PC-3 (cell line): ENCODE measurements at regions of chr1 and their contacts with region 1.

Region 1: DNA sequence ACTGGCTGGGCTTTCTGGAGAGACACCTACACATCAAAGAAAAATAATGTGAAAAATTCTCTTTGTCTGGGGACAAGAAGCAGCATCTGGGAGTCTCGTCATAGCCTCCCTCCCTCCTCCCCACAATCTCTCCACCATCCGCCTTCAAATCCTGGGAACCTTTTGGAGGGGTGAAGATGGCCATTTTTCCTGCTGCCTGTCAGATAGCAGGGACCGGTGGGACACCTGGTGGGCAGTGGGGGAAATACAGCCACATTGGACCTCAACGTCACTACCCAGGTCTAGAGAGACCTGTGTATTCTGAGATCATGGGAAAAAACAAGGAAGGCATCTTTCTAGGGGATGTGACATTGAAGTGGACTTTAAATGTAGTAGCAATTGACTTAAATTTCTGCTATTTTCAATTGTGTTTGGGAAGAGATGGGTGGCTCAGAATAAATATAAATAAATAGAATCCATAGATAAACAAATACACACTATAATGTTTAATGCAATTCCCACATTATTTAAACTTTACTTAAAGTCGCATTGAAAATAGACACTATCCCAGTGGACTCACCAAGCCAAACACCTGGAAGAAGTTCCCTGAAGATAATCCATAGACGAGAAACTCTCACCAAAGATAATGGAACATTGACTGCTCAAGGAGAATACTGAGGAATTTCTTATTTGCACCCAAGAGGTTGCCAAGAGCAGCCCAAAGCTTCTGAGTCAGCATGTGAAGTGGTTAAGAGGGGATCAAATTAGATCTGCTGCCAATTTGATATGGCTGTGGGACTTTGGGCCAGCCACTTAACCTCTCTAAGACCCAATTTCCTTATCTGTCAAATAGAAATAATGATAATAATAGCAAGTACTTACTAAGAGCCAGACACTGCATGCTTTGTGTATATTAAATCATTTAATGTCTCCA is 147.6 kb upstream of the CAMK1G start:
- DNase-seq: peak; percentile 98
- ATAC-seq: peak; percentile 81
- H3K4me3 ChIP-seq: no peak overlapping the region
- H3K27ac ChIP-seq: peak overlapping the region; percentile 88
- H3K4me1 ChIP-seq: peaks cover 53% of the 10 kb centered on the region
- H3K27me3 ChIP-seq: no peaks in the 10 kb centered on the region
- CTCF ChIP-seq: peak; percentile 98

Region 2: DNA sequence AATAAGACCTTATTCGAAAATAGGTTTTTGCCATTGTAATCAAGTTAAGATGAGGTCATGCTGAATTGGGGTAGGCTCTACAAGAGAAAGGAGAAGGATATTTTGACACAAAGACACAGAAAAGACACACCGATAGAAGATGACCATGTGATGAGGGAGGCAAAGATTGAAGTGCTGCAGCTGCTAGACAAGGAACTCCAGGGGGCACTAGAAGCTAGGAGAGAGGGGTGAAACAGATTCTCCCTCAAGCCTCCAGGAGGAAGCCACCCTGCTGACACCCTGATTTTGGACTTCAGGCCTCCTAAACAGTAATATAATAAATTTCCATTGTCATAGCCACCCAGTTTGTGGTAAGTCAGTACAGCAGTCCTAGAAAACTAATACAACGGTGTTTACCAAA is 359.2 kb before region 1 on chr1:
- CTCF ChIA-PET with region 1: no interaction called
- POLR2A ChIA-PET with region 1: no interaction called
- intact Hi-C with region 1: loop called (anchors 10 kb)
- DNase-seq: peak; percentile 67
- ATAC-seq: no peak
- H3K4me3 ChIP-seq: no peak overlapping the region
- H3K27ac ChIP-seq: no peak overlapping the region
- H3K4me1 ChIP-seq: peaks cover 43% of the 10 kb centered on the region
- H3K27me3 ChIP-seq: no peaks in the 10 kb centered on the region
- CTCF ChIP-seq: peak; percentile 86

Region 3: DNA sequence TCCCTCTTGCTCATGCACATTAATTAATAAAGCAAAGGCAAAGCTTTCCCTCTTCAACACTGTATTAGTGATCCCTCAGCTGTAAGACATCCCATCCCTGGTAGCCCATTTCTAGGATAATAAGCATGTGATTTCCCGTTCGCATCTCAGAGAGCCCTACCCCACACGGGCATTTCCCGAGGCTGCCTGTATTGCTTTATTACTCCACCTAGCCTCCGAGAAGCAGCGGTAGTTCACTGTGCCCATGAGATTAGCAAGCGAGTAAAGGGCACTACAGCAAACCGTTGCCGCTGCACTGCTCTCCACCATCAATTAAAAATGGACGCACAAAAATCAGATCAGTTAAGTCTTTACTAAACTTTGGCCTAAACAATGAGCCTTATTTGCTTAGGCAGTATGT is 236.6 kb before region 1 on chr1:
- CTCF ChIA-PET with region 1: interaction called, 13 read pairs
- POLR2A ChIA-PET with region 1: no interaction called
- intact Hi-C with region 1: loop called (anchors 2 kb)
- DNase-seq: no peak
- ATAC-seq: no peak
- H3K4me3 ChIP-seq: no peak overlapping the region
- H3K27ac ChIP-seq: no peak overlapping the region
- H3K4me1 ChIP-seq: 0 out of 2 replicates have a peak, but pooled peaks cover 3% of the 10 kb centered on the region
- H3K27me3 ChIP-seq: no peaks in the 10 kb centered on the region
- CTCF ChIP-seq: no peak

Region 4: GRCh38 chr1:209318181-209319056 is 117.5 kb before region 1 on chr1:
- CTCF ChIA-PET with region 1: no interaction called
- POLR2A ChIA-PET with region 1: no interaction called
- intact Hi-C with region 1: no loop called
- DNase-seq: peak; percentile 97
- ATAC-seq: peak; percentile 87
- H3K4me3 ChIP-seq: peak overlapping the region; percentile 37
- H3K27ac ChIP-seq: peak overlapping the region; percentile 93
- H3K4me1 ChIP-seq: peaks cover 35% of the 10 kb centered on the region
- H3K27me3 ChIP-seq: no peaks in the 10 kb centered on the region
- CTCF ChIP-seq: no peak

Region 5: DNA sequence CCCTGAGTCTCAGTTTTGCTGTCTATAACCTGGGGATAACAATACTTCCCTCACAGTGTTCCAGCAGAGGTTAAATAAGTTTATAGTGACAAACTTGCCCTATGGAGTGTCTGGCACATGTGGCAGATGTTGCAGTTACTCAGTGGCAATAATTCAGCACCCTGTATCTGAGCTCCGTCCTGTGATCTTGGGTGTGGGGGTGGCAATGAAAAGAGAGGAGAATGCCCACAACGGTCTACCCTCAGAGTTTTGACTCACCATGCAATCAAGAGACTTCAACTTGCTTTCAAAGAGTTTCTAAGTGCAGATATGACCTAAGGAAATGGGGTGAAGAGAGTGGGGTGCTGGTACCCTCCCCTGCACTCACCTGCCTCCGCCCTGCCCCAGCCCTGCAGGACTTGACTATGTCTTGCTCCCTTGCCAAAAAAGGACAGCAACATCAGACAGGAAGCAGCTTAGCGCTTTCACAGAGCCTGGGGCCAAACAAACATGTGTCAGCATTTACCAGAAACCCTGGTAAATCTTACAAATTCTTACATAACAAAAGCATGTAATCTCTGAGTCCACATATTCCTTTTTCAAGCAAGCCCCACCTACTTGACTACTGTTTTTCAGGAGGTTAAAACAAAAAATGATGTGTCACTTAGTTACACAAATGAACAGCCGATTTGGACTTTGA is 37.5 kb before region 1 on chr1:
- CTCF ChIA-PET with region 1: no interaction called
- POLR2A ChIA-PET with region 1: no interaction called
- intact Hi-C with region 1: loop called (anchors 1 kb)
- DNase-seq: peak; percentile 99
- ATAC-seq: peak; percentile 91
- H3K4me3 ChIP-seq: no peak overlapping the region
- H3K27ac ChIP-seq: peak overlapping the region; percentile 89
- H3K4me1 ChIP-seq: peaks cover 46% of the 10 kb centered on the region
- H3K27me3 ChIP-seq: no peaks in the 10 kb centered on the region
- CTCF ChIP-seq: no peak

Region 6: DNA sequence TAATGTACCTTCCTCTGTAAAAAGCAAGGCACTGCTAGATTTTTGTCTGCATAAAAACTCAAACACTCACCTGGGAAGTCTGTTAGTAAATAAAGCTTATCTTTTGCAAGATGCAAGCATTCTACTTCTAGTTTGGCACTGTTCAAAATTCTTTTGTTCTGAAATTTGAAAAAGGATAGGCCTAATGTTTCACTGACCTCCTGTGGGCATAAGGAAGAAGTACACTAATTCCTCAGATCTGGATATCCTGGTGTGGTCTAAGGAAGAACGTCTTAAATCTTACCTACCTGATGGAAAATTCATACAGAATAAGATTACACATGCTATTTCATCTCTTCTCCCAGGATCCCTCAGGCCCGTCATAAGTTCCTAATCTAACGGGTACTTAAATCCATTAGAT is 54.1 kb after region 1 on chr1:
- CTCF ChIA-PET with region 1: interaction called, 3 read pairs
- POLR2A ChIA-PET with region 1: no interaction called
- intact Hi-C with region 1: loop called (anchors 5 kb)
- DNase-seq: peak; percentile 82
- ATAC-seq: peak; percentile 83
- H3K4me3 ChIP-seq: no peak overlapping the region
- H3K27ac ChIP-seq: no peak overlapping the region
- H3K4me1 ChIP-seq: peaks cover 14% of the 10 kb centered on the region; the same call in 1 of the 2 replicates
- H3K27me3 ChIP-seq: no peaks in the 10 kb centered on the region
- CTCF ChIP-seq: peak; percentile 94

Region 7: DNA sequence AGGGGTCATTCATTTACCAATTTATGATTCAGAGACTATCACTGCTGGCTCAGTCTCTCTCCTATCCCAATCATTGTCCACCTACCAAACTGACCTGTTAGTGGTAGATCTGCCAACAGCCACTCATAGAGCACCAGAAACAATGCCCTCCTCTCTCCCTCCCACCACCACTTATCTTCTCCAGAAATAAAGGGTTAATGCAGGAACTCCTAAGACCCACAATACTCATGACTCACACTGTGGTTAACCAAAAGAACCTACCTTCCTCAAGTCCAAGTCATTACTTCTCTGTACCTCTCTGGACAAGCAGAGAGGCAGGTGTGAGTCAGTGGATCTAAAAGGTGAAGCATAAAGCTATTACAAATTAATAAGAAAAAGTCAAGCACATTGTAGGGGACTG is 106.7 kb after region 1 on chr1:
- CTCF ChIA-PET with region 1: no interaction called
- POLR2A ChIA-PET with region 1: no interaction called
- intact Hi-C with region 1: no loop called
- DNase-seq: peak; percentile 98
- ATAC-seq: peak; percentile 95
- H3K4me3 ChIP-seq: 0 out of 2 replicates have a peak overlapping the region, but pooled peaks have one; percentile 23
- H3K27ac ChIP-seq: peak overlapping the region; percentile 76
- H3K4me1 ChIP-seq: peaks cover 32% of the 10 kb centered on the region
- H3K27me3 ChIP-seq: no peaks in the 10 kb centered on the region
- CTCF ChIP-seq: no peak